Common myeloid progenitor, CD34-positive (primary cell): ENCODE measurements at regions of chr3 and their contacts with region 1.

Region 1: GRCh38 chr3:138234401-138235179 is 47.5 kb downstream of the ARMC8 start:
- DNase-seq: peak in 1 of 3 donors; percentile 12
- H3K4me3 ChIP-seq: no peak overlapping the region
- H3K27ac ChIP-seq: no peak overlapping the region
- H3K4me1 ChIP-seq: no peaks in the 10 kb centered on the region
- H3K27me3 ChIP-seq: no peaks in the 10 kb centered on the region

Region 2: DNA sequence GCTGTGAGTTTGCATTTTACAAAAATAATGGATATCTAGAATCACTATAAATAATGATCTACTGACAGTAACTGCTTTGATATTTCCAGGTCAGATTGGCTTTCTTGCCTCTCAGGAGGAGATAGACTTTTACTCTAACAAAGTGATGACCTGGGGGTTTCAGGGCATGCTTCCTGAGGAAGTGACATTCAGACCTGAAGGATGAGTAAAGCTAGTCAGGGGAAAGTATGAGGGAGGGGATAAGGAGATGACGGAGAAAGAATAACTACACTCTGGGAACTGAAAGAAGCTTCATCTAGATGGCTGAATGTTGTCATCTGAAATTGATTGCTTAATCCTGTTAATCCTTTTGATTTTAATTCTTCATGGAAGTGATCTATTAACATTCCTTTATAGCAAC is 15.3 kb before region 1 on chr3:
- CTCF ChIA-PET with region 1: interaction called, 11 read pairs
- POLR2A ChIA-PET with region 1: interaction called, 3 read pairs
- DNase-seq: no peak
- H3K4me3 ChIP-seq: no peak overlapping the region
- H3K27ac ChIP-seq: no peak overlapping the region
- H3K4me1 ChIP-seq: peaks cover 11 to 34% (median 18%) of the 10 kb centered on the region in 4 experiments
- H3K27me3 ChIP-seq: no peaks in the 10 kb centered on the region

Region 3: GRCh38 chr3:138271189-138271794 is 36.7 kb after region 1 on chr3:
- CTCF ChIA-PET with region 1: no interaction called
- POLR2A ChIA-PET with region 1: no interaction called
- DNase-seq: no peak
- H3K4me3 ChIP-seq: no peak overlapping the region
- H3K27ac ChIP-seq: no peak overlapping the region
- H3K4me1 ChIP-seq: no peaks in the 10 kb centered on the region
- H3K27me3 ChIP-seq: no peaks in the 10 kb centered on the region